PC-3 (cell line): ENCODE measurements at regions of chr7 and their contacts with region 1.

Region 1: GRCh38 chr7:127514499-127514898 is 70.9 kb downstream of the GCC1 start:
- DNase-seq: peak; percentile 57
- ATAC-seq: peak; percentile 98
- H3K4me3 ChIP-seq: no peak overlapping the region
- H3K27ac ChIP-seq: no peak overlapping the region
- H3K4me1 ChIP-seq: no peaks in the 10 kb centered on the region
- H3K27me3 ChIP-seq: peaks cover 15% of the 10 kb centered on the region; the same call in 1 of the 2 replicates
- CTCF ChIP-seq: peak; percentile 62

Region 2: DNA sequence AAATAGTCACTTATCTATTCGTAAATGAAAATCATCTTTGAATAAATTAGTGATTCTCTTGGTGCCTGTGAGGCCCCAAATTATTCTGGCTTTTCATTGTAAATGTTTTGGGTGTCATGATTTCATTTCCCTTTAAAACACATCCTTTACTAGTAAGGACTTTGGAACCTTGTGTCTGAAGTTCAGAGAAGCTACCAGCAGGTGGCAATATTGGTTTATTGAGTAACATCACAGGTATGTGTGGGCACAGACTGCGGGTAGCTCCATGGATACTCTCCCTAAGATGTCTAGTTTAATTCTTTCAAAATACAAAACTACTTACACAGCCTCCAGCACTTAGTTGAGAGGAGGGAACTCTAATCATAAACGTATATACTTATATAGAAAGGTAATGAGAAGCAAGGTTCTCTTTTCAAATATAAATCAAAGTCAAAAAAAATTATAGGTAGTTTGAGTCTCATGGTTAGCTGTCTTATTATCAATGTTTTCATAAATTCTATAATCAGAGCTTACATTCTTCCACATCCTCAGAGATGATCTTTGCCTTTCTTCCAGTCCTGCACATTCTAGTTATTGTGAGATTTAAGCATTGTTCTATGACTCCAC is 711.3 kb before region 1 on chr7:
- CTCF ChIA-PET with region 1: interaction called, 3 read pairs
- POLR2A ChIA-PET with region 1: no interaction called
- intact Hi-C with region 1: loop called (anchors 1 kb)
- DNase-seq: peak; percentile 78
- ATAC-seq: peak; percentile 92
- H3K4me3 ChIP-seq: no peak overlapping the region
- H3K27ac ChIP-seq: no peak overlapping the region
- H3K4me1 ChIP-seq: no peaks in the 10 kb centered on the region
- H3K27me3 ChIP-seq: no peaks in the 10 kb centered on the region
- CTCF ChIP-seq: peak; percentile 82

Region 3: DNA sequence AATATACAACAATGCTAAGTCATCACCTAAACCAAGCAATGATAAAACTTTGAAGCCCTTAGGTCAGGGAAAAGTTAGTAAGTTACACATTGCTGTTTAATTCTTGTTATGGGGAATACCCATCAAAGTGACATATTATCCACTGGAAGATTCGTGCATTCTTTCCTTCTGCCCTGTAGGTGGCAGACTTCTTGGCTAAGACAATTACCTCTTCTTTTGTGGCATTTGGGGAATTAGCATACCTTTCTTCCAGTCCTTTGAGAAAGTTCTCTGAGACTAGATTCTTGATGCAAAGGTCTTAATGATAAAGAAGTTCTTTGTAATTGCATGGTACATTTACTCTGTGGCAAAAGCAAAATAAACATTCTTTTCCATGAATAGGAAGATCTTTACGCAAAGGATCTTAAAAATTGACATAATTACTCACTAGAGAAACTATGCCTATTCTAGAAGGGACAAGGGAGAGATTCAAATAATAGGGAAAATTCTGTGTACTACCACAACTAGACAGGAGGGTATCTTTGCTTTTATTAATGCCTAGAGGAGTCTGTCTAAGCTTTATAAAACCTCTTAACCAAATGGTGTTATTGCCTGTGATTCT is 657.7 kb before region 1 on chr7:
- CTCF ChIA-PET with region 1: no interaction called
- POLR2A ChIA-PET with region 1: no interaction called
- intact Hi-C with region 1: loop called (anchors 2 kb)
- DNase-seq: peak; percentile 12
- ATAC-seq: no peak
- H3K4me3 ChIP-seq: no peak overlapping the region
- H3K27ac ChIP-seq: no peak overlapping the region
- H3K4me1 ChIP-seq: no peaks in the 10 kb centered on the region
- H3K27me3 ChIP-seq: no peaks in the 10 kb centered on the region
- CTCF ChIP-seq: peak; percentile 61

Region 4: DNA sequence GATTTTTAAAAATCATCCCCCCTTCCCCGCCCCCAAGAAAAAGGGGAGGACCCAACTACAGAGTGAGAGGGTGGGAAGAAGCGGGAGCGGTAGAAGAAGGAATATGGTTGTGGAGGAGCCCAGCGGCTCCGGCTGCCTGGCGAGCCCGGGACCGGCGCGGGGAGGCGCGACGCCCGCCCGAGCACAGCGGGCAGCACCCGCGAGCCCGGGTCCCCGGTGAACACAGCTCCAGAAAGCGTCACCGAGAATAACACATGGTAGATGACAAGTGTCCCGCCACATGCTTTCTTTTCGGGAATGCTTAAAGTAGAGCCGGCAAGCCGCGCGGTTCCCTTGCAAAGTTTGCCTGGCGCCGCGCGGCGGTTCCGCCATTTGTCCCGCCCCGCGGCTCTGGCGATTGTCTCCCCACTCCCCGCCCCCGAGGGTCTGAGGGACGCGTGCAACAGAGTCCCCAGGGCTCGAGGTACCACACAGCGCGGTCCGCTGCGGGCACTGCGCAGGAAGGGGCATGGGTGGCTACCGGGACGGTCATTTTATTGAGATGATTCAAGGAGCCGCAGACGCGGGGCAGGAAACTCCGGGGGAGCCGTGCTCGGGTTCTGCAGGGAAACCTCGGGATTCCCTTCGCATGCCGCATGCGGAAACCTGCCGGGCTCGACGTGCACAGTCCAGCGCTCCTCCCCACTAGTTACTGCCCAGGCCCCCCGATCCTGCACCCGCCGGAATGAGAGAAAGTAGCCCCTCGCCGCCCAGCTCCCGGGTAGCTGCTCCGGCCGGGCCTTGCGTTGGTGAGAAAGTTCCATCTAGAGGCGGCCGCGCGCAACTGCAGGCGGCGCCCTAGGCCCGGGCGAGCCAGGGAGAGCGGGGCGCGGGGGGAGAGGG is 261.0 kb before region 1 on chr7:
- CTCF ChIA-PET with region 1: interaction called, 6 read pairs
- POLR2A ChIA-PET with region 1: no interaction called
- intact Hi-C with region 1: loop called (anchors 1 kb)
- DNase-seq: peak; percentile 58
- ATAC-seq: peak; percentile 84
- H3K4me3 ChIP-seq: peak overlapping the region; percentile 79
- H3K27ac ChIP-seq: no peak overlapping the region
- H3K4me1 ChIP-seq: peaks cover 13% of the 10 kb centered on the region
- H3K27me3 ChIP-seq: peaks cover 48% of the 10 kb centered on the region
- CTCF ChIP-seq: peak; percentile 83

Region 5: DNA sequence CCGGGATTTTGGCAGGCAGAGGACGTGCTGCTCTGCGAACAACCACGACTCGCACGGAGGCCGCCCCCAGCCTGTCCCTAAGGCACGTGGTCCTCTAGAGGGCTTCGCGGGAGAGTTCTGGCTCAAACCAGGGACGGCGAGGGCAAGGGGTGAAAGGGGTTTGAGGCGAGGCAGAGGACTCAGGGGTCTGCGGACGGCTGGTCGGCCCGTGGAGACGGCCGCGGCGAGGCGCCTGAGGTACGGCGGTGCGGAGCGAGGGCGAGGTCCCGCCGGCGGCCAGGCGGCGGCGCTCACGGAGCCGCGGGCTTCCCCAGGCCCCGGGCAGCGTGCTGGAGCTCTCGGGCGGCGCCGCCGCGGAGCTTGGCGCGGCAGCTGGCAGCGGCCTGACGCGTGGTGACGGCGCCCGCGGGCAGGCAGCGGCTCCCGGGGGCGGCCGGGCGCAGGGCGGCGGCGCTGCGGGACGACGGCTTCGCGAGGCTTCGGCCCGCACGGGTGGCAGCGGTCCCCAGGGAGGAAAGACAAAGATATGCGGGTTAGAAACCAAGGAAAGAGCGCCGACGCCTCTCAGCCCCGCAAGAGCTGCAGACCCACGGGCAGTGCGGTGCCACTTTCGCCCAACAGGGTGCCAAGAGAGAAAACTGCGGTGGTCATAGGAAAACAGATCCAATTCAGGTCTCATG is 166.8 kb before region 1 on chr7:
- CTCF ChIA-PET with region 1: interaction called, 10 read pairs
- POLR2A ChIA-PET with region 1: no interaction called
- intact Hi-C with region 1: loop called (anchors 10 kb)
- DNase-seq: peak; percentile 38
- ATAC-seq: peak; percentile 97
- H3K4me3 ChIP-seq: peak overlapping the region; percentile 37; the same call in 1 of the 2 replicates
- H3K27ac ChIP-seq: no peak overlapping the region
- H3K4me1 ChIP-seq: no peaks in the 10 kb centered on the region
- H3K27me3 ChIP-seq: no peaks in the 10 kb centered on the region
- CTCF ChIP-seq: 0 out of 2 replicates have a peak, but pooled peaks have one; percentile 9

Region 6: DNA sequence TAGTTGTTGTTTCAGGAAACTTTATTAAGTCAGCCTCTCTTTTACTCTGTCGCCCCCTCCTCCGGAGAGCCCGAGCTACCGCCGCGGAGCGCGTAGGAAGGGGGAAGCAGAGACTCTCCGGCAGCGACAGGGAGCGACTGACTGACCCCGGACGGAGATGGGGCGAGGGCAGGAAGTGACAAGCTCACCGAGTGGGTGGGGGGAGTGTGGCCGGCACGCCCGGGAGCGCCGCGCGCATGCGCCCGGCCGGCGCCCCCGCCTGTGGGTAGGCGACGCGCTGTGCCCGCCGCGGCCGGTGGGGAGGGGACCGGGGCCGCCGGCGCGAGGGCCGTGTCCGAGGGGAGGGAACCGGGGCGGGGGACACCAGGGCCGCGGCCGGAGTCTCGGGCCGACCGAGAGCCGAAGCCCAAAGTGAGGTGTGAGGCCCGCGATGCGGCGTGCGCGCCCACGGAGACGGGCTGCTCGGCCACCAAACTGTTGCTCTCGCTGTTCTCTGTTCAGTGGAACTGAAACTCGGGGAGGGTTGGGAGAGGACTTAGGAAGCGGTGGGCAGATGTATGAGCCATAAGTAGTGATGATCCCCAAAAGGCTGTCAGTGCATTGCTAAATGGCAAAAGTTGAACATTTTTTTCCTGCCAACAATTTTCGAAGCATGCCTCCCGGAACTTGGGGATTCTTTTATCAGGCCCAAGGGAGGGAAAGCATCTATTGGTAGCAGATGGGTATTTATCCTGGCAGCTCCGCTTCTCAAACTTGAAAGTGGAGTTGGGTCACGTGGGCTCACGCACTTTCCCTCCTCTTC is 121.7 kb before region 1 on chr7 and contains the start of gene ZNF800:
- CTCF ChIA-PET with region 1: no interaction called
- POLR2A ChIA-PET with region 1: no interaction called
- intact Hi-C with region 1: loop called (anchors 5 kb)
- DNase-seq: peak; percentile 77
- ATAC-seq: peak; percentile 88
- H3K4me3 ChIP-seq: peak within 1 kb of the TSS; percentile 99
- H3K27ac ChIP-seq: peak within 1 kb of the TSS; percentile 63
- H3K4me1 ChIP-seq: peaks cover 21% of the 10 kb centered on the region
- H3K27me3 ChIP-seq: no peaks in the 10 kb centered on the region
- CTCF ChIP-seq: no peak
- total RNA-seq, gene ZNF800: 13.2 and 18.5 TPM in 2 replicates

Region 7: DNA sequence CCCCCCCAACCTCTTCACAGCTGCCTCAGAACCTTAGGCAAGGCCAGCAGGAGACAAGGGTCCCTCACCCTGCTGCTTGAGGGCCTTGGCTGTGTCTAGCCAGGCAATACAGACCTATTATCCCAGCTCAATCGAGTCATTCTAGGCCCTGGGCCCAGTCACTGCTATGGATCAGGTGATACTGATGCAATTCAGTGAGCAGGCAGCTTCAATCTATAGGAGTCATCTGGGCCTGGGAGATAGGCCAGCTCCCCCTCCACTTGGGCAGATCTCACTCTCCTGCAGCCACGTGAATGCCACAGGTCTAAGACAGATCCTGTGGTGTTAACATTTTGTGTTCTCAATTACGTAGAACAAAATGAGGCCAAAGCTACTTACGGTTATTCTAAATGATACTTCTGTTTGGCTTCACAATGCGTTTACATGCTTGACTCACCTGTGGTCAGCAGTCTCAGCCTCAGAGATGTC is 584.7 kb after region 1 on chr7:
- CTCF ChIA-PET with region 1: no interaction called
- POLR2A ChIA-PET with region 1: no interaction called
- intact Hi-C with region 1: no loop called
- DNase-seq: peak; percentile 29
- ATAC-seq: peak; percentile 5
- H3K4me3 ChIP-seq: no peak overlapping the region
- H3K27ac ChIP-seq: no peak overlapping the region
- H3K4me1 ChIP-seq: no peaks in the 10 kb centered on the region
- H3K27me3 ChIP-seq: no peaks in the 10 kb centered on the region
- CTCF ChIP-seq: no peak